ENCODE measurements at regions of chr1 and their contacts with region 1.

Region 1: GRCh38 chr1:13483946-13484345 is 29.9 kb downstream of the LRRC38 start:
- DNase-seq: no peak
- H3K4me3 ChIP-seq: no peak overlapping the region
- H3K27ac ChIP-seq: no peak overlapping the region
- H3K4me1 ChIP-seq: no peaks in the 10 kb centered on the region
- H3K27me3 ChIP-seq: peaks cover 48% of the 10 kb centered on the region
- CTCF ChIP-seq: no peak

Region 2: DNA sequence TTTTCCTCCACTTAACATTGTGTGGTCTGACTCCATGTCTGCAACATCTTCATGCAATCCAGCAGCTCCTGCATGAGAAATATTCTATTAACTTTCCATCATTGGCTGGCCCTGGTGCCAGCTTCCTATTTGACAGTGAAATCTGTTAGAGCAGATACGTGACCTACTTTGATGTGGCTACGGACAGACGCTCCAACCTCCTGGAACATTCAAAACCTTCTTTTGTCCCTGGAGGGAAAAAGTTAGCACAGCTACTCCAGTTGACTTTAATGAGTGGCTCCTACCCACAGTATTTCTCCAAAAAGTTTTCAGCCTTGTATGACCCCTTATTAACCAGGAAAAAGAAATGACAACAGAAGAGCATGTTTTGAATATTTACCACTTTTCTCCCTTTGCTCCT is 51.7 kb before region 1 on chr1:
- CTCF ChIA-PET with region 1: no interaction called
- POLR2A ChIA-PET with region 1: no interaction called
- intact Hi-C with region 1: no loop called
- DNase-seq: no peak
- H3K4me3 ChIP-seq: no peak overlapping the region
- H3K27ac ChIP-seq: no peak overlapping the region
- H3K4me1 ChIP-seq: no peaks in the 10 kb centered on the region
- H3K27me3 ChIP-seq: peaks cover 18% of the 10 kb centered on the region
- CTCF ChIP-seq: no peak

Region 3: GRCh38 chr1:13536571-13536970 is 52.6 kb after region 1 on chr1:
- CTCF ChIA-PET with region 1: no interaction called
- POLR2A ChIA-PET with region 1: no interaction called
- intact Hi-C with region 1: loop called (anchors 2 kb)
- DNase-seq: no peak
- H3K4me3 ChIP-seq: no peak overlapping the region
- H3K27ac ChIP-seq: no peak overlapping the region
- H3K4me1 ChIP-seq: no peaks in the 10 kb centered on the region
- H3K27me3 ChIP-seq: peaks cover 45% of the 10 kb centered on the region
- CTCF ChIP-seq: no peak